Mammary epithelial cell (primary cell): ENCODE measurements at regions of chr14 and their contacts with region 1.

Region 1: DNA sequence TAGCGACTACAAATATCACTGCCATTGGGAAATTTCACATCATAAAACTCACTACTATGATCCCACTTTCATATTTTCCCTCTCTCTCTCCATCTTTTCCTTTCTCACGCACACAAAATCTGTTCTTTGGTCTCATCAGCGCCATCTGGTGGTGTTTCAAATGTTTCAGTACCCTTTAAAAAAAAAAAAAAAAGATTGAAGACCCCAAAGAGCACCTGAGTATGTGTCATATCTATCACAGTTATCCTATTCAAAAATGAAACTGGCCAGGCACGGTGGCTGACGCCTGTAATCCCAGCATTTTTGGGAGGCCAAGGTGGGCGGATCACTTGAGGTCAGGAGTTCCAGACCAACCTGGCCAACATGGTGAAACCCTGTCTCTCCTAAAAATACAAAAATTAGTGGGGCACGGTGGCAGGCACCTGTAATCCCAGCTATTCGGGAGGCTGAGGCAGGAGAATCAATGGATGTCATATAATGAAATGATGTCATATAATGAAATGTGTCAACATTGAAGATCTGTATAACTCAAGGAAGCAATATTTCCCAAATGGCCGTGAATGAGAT is 72.4 kb downstream of the TTC9 start:
- DNase-seq: peak; percentile 34
- H3K4me3 ChIP-seq: no peak overlapping the region
- H3K27ac ChIP-seq: no peak overlapping the region
- H3K4me1 ChIP-seq: peaks cover 30% of the 10 kb centered on the region
- H3K27me3 ChIP-seq: no peaks in the 10 kb centered on the region
- CTCF ChIP-seq: peak; percentile 45 to 63

Region 2: DNA sequence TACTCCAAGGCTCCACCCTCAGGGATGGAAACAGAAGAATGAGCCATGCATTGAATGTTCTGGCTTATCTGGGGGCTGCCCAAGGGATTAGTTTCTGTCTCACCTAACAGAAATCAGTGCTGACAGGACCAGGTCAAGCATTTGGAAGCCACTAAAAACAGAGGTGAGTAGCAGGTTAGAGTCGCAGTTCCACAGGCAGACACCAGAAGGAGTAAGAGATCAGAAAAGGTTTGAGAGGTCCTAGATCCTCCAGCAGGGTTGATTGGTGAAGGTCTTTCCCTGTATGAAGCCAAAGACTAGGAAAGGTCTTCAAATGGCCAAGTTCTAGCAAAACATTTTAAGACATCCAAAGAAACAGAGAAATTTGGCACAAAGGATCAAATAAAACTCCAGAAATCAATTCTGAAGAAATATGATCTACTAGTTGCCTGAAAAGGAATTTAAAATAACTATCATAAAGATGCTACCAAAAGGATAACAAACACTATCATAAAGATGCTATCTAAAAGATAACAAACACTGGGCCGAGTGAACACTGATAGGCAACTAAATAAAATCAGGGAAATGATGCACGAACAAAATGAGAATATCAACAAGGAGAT is 91.9 kb before region 1 on chr14:
- CTCF ChIA-PET with region 1: no interaction called
- dilution Hi-C with region 1: no loop called
- in situ Hi-C with region 1: loop called (anchors 5 kb)
- intact Hi-C with region 1: loop called (anchors 1 kb)
- DNase-seq: peak; percentile 52
- H3K4me3 ChIP-seq: no peak overlapping the region
- H3K27ac ChIP-seq: no peak overlapping the region
- H3K4me1 ChIP-seq: peaks cover 7% of the 10 kb centered on the region
- H3K27me3 ChIP-seq: no peaks in the 10 kb centered on the region
- CTCF ChIP-seq: peak; percentile 92 to 95

Region 3: GRCh38 chr14:70640938-70641547 is 73.1 kb before region 1 on chr14:
- CTCF ChIA-PET with region 1: interaction called, 5 read pairs
- dilution Hi-C with region 1: no loop called
- in situ Hi-C with region 1: no loop called
- intact Hi-C with region 1: loop called (anchors 5 kb)
- DNase-seq: peak; percentile 64
- H3K4me3 ChIP-seq: peak overlapping the region; percentile 37 to 73 (median 70)
- H3K27ac ChIP-seq: no peak overlapping the region
- H3K4me1 ChIP-seq: peaks cover 25% of the 10 kb centered on the region
- H3K27me3 ChIP-seq: no peaks in the 10 kb centered on the region
- CTCF ChIP-seq: no peak

Region 4: GRCh38 chr14:70789361-70789760 is 75.2 kb after region 1 on chr14:
- CTCF ChIA-PET with region 1: interaction called, 19 read pairs
- dilution Hi-C with region 1: no loop called
- in situ Hi-C with region 1: no loop called
- intact Hi-C with region 1: no loop called
- DNase-seq: peak; percentile 74
- H3K4me3 ChIP-seq: no peak overlapping the region
- H3K27ac ChIP-seq: peak overlapping the region; percentile 45
- H3K4me1 ChIP-seq: peaks cover 61% of the 10 kb centered on the region
- H3K27me3 ChIP-seq: no peaks in the 10 kb centered on the region
- CTCF ChIP-seq: no peak

Region 5: GRCh38 chr14:70816525-70816924 is 102.4 kb after region 1 on chr14:
- CTCF ChIA-PET with region 1: no interaction called
- dilution Hi-C with region 1: no loop called
- in situ Hi-C with region 1: no loop called
- intact Hi-C with region 1: loop called (anchors 2 kb)
- DNase-seq: no peak
- H3K4me3 ChIP-seq: no peak overlapping the region
- H3K27ac ChIP-seq: no peak overlapping the region
- H3K4me1 ChIP-seq: peaks cover 30% of the 10 kb centered on the region
- H3K27me3 ChIP-seq: no peaks in the 10 kb centered on the region
- CTCF ChIP-seq: no peak

Region 6: GRCh38 chr14:71355324-71356201 is 641.4 kb after region 1 on chr14:
- CTCF ChIA-PET with region 1: no interaction called
- dilution Hi-C with region 1: no loop called
- in situ Hi-C with region 1: no loop called
- intact Hi-C with region 1: no loop called
- DNase-seq: peak; percentile 38
- H3K4me3 ChIP-seq: peak overlapping the region in 2 of 3 experiments; percentile 6 to 20
- H3K27ac ChIP-seq: peak overlapping the region; percentile 77
- H3K4me1 ChIP-seq: peaks cover 17% of the 10 kb centered on the region
- H3K27me3 ChIP-seq: no peaks in the 10 kb centered on the region
- CTCF ChIP-seq: no peak